GM12878 (cell line): ENCODE measurements at regions of chr6 and their contacts with region 1.

Region 1: DNA sequence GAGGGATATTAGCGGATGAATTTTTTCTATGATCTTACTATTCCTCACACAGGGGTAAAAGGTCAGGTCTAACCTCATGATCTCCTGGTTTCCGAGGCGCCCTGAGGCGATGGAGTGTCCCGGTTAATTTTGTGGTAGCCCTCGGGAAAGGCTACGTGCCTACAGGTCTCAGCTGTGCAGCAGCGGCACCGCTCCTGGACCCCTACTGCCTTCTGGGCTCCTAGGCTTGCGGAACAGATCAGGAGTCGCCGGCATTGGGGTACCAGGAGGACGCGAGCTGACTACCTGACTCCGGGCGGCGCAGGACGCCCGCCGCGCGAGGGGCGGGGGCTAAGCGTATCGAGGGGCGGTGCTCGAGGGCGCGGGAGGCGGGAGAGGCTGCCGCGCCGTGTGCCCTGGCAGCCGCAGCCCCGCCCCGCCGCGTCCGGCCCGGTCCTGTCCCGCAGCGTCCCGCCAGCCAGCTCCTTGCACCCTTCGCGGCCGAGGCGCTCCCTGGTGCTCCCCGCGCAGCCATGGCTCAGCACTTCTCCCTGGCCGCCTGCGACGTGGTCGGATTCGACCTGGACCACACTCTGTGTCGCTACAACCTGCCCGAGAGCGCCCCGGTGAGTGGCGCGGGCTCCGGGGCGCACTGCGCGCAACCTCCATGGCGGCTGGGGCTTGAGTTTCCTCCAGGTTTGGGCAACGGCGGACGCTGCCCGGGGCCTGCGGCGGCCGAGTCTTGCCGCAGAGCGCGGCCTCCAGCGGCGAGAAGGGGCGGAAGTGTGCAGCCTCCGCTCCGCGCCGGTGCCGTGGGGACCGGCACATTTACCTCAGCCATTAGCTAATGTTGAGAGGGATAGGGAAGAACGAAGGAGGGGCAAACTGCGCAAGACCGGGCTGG is at the start of gene NT5DC1:
- DNase-seq: peak; percentile 60
- ATAC-seq: peak; percentile 86
- H3K4me3 ChIP-seq: peak within 1 kb of the TSS; percentile 67
- H3K27ac ChIP-seq: peak within 1 kb of the TSS; percentile 93
- H3K4me1 ChIP-seq: peaks cover 19% of the 10 kb centered on the region
- H3K27me3 ChIP-seq: no peaks in the 10 kb centered on the region
- CTCF ChIP-seq: peak in 2 of 3 experiments; percentile 46 to 48; a peak in 5 of 6 replicates
- EP300 ChIP-seq: no peak
- POLR2A ChIP-seq: peak; percentile 97
- RAD21 ChIP-seq: peak; percentile 15; the same call in 1 of the 2 replicates
- polyA plus RNA-seq, gene NT5DC1: 43.5 to 67.0 TPM

Region 2: DNA sequence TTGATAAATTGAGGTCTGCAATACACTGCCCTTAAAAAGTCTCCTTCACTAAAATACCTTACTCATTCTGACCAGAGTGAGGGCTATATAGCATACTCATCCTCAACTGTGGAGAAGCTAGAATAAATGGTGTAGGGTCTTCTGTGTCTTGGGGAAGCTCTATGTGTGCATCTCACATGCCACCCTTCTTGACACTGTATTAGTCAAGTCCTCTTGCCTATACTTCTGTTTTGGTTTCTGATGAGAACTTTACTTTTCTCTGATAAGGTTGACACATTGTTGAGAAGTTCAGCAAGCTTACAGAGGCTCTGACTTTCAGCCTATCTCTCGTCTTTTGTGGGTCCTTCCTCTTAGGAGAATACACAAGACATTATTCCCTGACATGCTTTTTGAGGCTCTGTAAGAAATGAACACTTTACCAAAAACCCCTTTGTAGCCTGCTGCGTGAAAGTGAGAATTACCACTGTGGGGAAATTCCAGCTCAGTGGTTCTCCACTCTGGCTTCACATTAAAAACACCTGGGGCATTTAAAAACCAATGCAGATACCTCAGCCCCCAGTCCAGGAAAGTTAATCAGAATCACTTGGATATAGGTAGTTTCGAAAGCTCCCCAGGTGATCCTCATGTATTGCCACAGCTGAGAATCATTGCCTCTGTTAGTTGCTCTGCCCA is 1385.7 kb before region 1 on chr6:
- CTCF ChIA-PET with region 1: no interaction called
- POLR2A ChIA-PET with region 1: no interaction called
- RAD21 ChIA-PET with region 1: no interaction called
- SMC1A ChIA-PET with region 1: no interaction called
- in situ Hi-C with region 1: no loop called
- intact Hi-C with region 1: loop called (anchors 10 kb)
- DNase-seq: peak; percentile 37
- ATAC-seq: peak; percentile 68
- H3K4me3 ChIP-seq: no peak overlapping the region
- H3K27ac ChIP-seq: peak overlapping the region; percentile 68; the same call in 1 of the 2 replicates
- H3K4me1 ChIP-seq: peaks cover 13% of the 10 kb centered on the region
- H3K27me3 ChIP-seq: no peaks in the 10 kb centered on the region
- CTCF ChIP-seq: no peak
- EP300 ChIP-seq: peak; percentile 31 to 38; a peak in 1 of 4 replicates
- POLR2A ChIP-seq: no peak
- RAD21 ChIP-seq: no peak

Region 3: DNA sequence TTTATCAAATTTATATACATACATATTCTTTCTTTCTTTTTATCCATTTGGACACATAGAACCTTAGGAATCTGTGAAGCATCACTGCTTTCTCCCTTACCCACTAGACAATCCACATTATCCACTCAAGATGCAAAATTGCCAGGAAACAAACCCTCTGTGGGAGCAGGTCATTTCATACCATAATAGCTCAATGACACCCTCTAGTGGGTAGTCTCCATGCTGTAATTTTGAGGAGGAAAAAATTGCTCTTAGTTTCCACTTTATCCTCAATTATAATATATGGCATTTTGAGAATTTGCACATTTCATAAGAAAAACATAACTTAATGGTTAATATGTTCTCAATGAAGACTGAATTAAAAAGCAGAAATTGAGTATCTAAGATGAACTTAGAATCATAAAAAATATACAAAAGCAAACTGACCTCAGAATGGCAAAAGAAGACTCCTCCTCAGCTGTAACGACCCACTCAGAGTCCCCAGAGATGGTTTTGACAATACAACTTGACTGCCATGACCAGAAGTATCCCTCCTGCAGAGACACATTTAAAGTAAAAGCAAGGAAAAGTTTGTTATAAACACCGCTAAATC is 204.0 kb before region 1 on chr6:
- CTCF ChIA-PET with region 1: interaction called, 7 read pairs
- POLR2A ChIA-PET with region 1: no interaction called
- RAD21 ChIA-PET with region 1: no interaction called
- SMC1A ChIA-PET with region 1: interaction called, 6 read pairs
- in situ Hi-C with region 1: loop called (anchors 10 kb)
- intact Hi-C with region 1: loop called (anchors 2 kb)
- DNase-seq: no peak
- ATAC-seq: peak; percentile 45
- H3K4me3 ChIP-seq: no peak overlapping the region
- H3K27ac ChIP-seq: no peak overlapping the region
- H3K4me1 ChIP-seq: peaks cover 13% of the 10 kb centered on the region
- H3K27me3 ChIP-seq: no peaks in the 10 kb centered on the region
- CTCF ChIP-seq: peak; percentile 72 to 79 (median 74)
- EP300 ChIP-seq: no peak
- POLR2A ChIP-seq: no peak
- RAD21 ChIP-seq: peak; percentile 91

Region 4: GRCh38 chr6:116010790-116011401 is 89.8 kb before region 1 on chr6:
- CTCF ChIA-PET with region 1: interaction called, 183 read pairs
- POLR2A ChIA-PET with region 1: interaction called, 40 read pairs
- RAD21 ChIA-PET with region 1: interaction called, 102 read pairs
- SMC1A ChIA-PET with region 1: interaction called, 91 read pairs
- in situ Hi-C with region 1: loop called (anchors 5 kb)
- intact Hi-C with region 1: loop called (anchors 1 kb)
- DNase-seq: no peak
- ATAC-seq: peak; percentile 67
- H3K4me3 ChIP-seq: peak overlapping the region; percentile 9; the same call in 1 of the 2 replicates
- H3K27ac ChIP-seq: peak overlapping the region; percentile 59
- H3K4me1 ChIP-seq: peaks cover 53% of the 10 kb centered on the region
- H3K27me3 ChIP-seq: no peaks in the 10 kb centered on the region
- CTCF ChIP-seq: peak; percentile 82 to 88 (median 84)
- EP300 ChIP-seq: no peak
- POLR2A ChIP-seq: no peak
- RAD21 ChIP-seq: peak; percentile 95

Region 5: GRCh38 chr6:116060572-116061283 is 39.9 kb before region 1 on chr6 and contains the start of gene FRK:
- CTCF ChIA-PET with region 1: interaction called, 8 read pairs
- POLR2A ChIA-PET with region 1: interaction called, 5 read pairs
- RAD21 ChIA-PET with region 1: interaction called, 15 read pairs
- SMC1A ChIA-PET with region 1: interaction called, 14 read pairs
- in situ Hi-C with region 1: no loop called
- intact Hi-C with region 1: no loop called
- DNase-seq: no peak
- ATAC-seq: peak; percentile 60
- H3K4me3 ChIP-seq: no peak within 1 kb of the TSS
- H3K27ac ChIP-seq: no peak within 1 kb of the TSS
- H3K4me1 ChIP-seq: peaks cover 11% of the 10 kb centered on the region
- H3K27me3 ChIP-seq: no peaks in the 10 kb centered on the region
- CTCF ChIP-seq: no peak
- EP300 ChIP-seq: no peak
- POLR2A ChIP-seq: no peak
- RAD21 ChIP-seq: no peak
- polyA plus RNA-seq, gene FRK: 0.29 to 0.32 TPM

Region 6: GRCh38 chr6:116087437-116088027 is 13.1 kb before region 1 on chr6:
- CTCF ChIA-PET with region 1: interaction called, 52 read pairs
- POLR2A ChIA-PET with region 1: interaction called, 29 read pairs
- RAD21 ChIA-PET with region 1: interaction called, 56 read pairs
- SMC1A ChIA-PET with region 1: interaction called, 61 read pairs
- in situ Hi-C with region 1: no loop called
- intact Hi-C with region 1: no loop called
- DNase-seq: peak; percentile 92
- ATAC-seq: peak; percentile 92
- H3K4me3 ChIP-seq: peak overlapping the region; percentile 15; the same call in 1 of the 2 replicates
- H3K27ac ChIP-seq: peak overlapping the region; percentile 98
- H3K4me1 ChIP-seq: peaks cover 57% of the 10 kb centered on the region
- H3K27me3 ChIP-seq: no peaks in the 10 kb centered on the region
- CTCF ChIP-seq: no peak
- EP300 ChIP-seq: peak; percentile 45 to 80; a peak in 1 of 4 replicates
- POLR2A ChIP-seq: 0 out of 2 replicates have a peak, but pooled peaks have one; percentile 18
- RAD21 ChIP-seq: 0 out of 2 replicates have a peak, but pooled peaks have one; percentile 4

Region 7: DNA sequence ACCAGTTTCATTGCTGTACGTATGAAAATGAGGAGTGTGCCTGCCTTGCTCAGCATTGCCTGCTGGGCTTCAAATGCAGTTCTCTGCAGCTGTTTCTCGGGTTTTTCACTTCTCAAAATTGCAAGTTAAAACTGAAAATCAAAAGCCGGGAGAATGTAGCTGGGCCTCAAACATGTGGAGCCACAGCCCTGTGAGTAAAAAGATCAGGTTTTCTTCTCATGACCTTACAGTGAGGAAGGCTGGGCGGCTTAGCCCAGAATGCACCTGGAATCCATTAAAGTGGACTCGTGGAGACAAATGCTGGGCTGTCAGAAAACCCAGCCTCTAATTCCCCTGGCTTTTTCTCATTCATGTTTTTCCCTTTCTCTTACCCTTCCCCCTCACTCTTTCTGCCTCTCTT is 304.5 kb after region 1 on chr6:
- CTCF ChIA-PET with region 1: no interaction called
- POLR2A ChIA-PET with region 1: no interaction called
- RAD21 ChIA-PET with region 1: no interaction called
- SMC1A ChIA-PET with region 1: no interaction called
- in situ Hi-C with region 1: no loop called
- intact Hi-C with region 1: loop called (anchors 10 kb)
- DNase-seq: peak; percentile 82
- ATAC-seq: peak; percentile 67
- H3K4me3 ChIP-seq: peak overlapping the region; percentile 46; the same call in 1 of the 2 replicates
- H3K27ac ChIP-seq: peak overlapping the region; percentile 90
- H3K4me1 ChIP-seq: peaks cover 52% of the 10 kb centered on the region
- H3K27me3 ChIP-seq: no peaks in the 10 kb centered on the region
- CTCF ChIP-seq: no peak
- EP300 ChIP-seq: 0 out of 4 replicates have a peak, but pooled peaks have one; percentile 37 to 44
- POLR2A ChIP-seq: 0 out of 2 replicates have a peak, but pooled peaks have one; percentile 28
- RAD21 ChIP-seq: no peak